Testis (tissue), 5 donors: ENCODE measurements at regions of chr15 and their contacts with region 1.

Region 1: DNA sequence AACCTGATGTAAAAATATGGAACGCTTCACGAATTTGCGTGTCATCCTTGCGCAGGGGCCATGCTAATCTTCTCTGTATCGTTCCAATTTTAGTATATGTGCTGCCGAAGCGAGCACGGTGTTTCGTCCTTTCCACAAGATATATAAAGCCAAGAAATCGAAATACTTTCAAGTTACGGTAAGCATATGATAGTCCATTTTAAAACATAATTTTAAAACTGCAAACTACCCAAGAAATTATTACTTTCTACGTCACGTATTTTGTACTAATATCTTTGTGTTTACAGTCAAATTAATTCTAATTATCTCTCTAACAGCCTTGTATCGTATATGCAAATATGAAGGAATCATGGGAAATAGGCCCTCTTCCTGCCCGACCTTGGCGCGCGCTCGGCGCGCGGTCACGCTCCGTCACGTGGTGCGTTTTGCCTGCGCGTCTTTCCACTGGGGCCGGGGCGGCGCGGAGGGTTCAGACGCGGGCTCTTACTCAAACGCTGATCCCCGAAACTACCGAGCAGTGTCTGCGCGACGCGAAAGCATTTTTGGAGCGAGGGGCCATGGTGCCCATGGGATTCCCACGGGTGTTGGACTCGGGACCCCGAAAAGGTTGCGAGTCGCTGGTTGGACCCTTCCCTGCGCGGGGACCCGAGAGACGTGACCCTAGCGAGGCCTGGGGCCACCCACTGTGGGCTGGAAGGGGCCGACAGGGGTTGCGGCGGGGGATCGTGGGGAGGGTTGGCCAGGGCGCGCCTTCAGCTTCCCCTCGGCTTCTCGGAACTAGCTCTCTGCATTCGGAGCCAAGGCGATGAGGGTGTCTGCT is at the start of gene RNU6-1:
- DNase-seq: peak; percentile 96
- H3K4me3 ChIP-seq: peak within 1 kb of the TSS; percentile 88 to 93
- H3K27ac ChIP-seq: peak within 1 kb of the TSS; percentile 99 to 100
- H3K4me1 ChIP-seq: peaks cover 46% of the 10 kb centered on the region
- H3K27me3 ChIP-seq: no peaks in the 10 kb centered on the region
- CTCF ChIP-seq: no peak
- POLR2A ChIP-seq: no peak
- total RNA-seq, gene RNU6-1: not detected

Region 2: GRCh38 chr15:67456677-67457529 is 383.2 kb before region 1 on chr15:
- intact Hi-C with region 1: loop called (anchors 10 kb)
- DNase-seq: peak; percentile 89
- H3K4me3 ChIP-seq: no peak overlapping the region
- H3K27ac ChIP-seq: no peak overlapping the region
- H3K4me1 ChIP-seq: no peaks in the 10 kb centered on the region
- H3K27me3 ChIP-seq: no peaks in the 10 kb centered on the region
- CTCF ChIP-seq: peak; percentile 46 to 76 (median 66)
- POLR2A ChIP-seq: no peak

Region 3: GRCh38 chr15:67521029-67521811 is 318.9 kb before region 1 on chr15 and contains the start of gene C15orf61:
- intact Hi-C with region 1: loop called (anchors 10 kb)
- DNase-seq: peak; percentile 85
- H3K4me3 ChIP-seq: peak within 1 kb of the TSS; percentile 83 to 88
- H3K27ac ChIP-seq: peak within 1 kb of the TSS; percentile 97 to 98
- H3K4me1 ChIP-seq: peaks cover 8% of the 10 kb centered on the region
- H3K27me3 ChIP-seq: no peaks in the 10 kb centered on the region
- CTCF ChIP-seq: no peak
- POLR2A ChIP-seq: no peak
- total RNA-seq, gene C15orf61: 24.9 to 28.6 TPM